Activated CD4-positive, alpha-beta T cell treated with anti-CD3 and anti-CD28 coated beads for 36 hours (primary cell): ENCODE measurements at regions of chr20 and their contacts with region 1.

Region 1: DNA sequence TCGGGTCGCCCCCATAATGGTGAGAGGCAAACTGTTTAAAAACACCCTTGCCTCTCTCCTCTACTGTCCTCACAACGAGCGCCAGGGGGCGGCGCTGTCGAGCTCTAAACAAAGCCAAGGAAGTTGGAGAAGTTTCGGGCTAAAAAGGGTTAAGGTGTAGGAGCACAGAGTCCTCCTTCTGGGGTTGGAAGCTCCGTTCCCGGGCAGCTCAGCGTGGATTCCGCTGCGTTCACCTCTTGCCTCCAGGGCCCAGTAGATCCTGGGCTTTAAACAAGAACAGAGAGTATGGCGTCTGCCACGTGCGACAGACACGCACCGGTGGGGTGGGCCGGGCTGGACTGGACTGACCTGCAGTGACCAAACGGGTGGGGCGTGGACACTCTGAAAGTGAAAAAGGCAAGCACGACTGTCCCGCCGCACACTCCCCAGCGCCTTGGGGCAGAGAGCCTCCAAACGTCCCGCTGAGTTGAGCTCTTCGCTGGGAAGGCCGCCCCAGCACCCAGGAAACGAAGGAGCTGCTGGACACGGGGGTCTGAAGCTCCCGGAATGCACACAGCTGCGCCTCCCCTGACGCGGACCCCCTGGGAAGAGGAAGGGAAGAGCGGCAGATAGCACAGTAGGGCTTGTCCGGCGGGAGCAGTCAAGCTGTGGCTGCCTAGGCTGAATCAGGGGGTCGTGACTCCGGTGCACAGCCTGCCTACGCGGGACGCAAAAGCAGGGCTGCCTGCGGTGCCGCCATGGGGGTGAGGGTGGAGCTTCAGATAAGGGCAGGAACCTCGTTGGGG is 1.6 kb upstream of the THBD start:
- DNase-seq: peak; percentile 78
- ATAC-seq: peak; percentile 49
- H3K4me3 Mint-ChIP-seq: no peak overlapping the region
- H3K27ac Mint-ChIP-seq: no peak overlapping the region
- H3K4me1 Mint-ChIP-seq: peaks cover 5% of the 10 kb centered on the region
- H3K27me3 Mint-ChIP-seq: peaks cover 52% of the 10 kb centered on the region

Region 2: DNA sequence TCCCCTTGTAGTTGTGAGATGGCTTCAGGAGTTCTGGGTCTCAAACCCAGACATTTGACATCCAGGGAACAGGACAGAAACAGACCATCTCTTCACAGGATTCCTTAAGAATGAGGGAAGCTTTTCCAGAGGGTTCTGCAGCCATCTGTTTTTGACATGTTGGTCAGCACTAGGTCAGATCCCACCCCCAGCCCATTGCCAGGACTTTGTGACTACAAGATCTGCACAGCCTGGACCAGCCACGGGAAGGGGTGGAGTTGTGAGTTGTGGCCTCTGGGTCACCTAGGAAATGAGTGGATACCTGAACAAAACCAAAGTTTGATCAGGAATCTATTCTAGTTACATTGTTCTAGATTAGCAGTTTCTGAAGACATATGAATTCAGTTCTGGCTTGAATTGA is 55.1 kb before region 1 on chr20:
- CTCF ChIA-PET with region 1: no interaction called
- POLR2A ChIA-PET with region 1: no interaction called
- intact Hi-C with region 1: no loop called
- DNase-seq: no peak
- ATAC-seq: no peak
- H3K4me3 Mint-ChIP-seq: no peak overlapping the region
- H3K27ac Mint-ChIP-seq: no peak overlapping the region
- H3K4me1 Mint-ChIP-seq: no peaks in the 10 kb centered on the region
- H3K27me3 Mint-ChIP-seq: peaks cover 2% of the 10 kb centered on the region

Region 3: DNA sequence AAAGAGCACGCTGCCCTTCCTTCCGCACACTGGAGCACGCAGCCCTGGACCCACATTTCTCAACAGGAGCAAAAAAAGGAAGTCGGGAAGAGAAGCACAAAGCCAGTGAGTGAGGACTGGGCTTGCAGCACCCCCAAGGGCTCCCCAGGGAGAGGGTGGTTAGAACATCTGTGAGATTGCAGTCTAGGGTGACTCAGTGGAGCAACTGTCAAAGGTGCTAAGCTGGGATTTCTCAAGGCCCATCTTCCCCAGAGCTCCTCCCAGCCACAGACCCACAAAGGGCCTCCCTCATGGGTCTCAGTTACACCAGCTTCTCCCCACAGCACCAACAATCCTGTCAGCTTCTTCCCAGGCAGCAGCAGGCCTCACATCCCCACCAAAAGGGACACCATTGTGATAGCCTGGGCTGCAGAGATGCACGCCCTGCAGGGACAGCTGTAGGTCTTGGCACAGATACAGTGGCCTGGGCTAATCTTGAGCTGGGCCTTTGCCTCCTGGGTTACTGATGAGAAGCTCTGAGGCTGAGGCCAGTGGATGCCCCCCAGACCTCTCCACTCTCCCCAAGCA is 74.7 kb after region 1 on chr20:
- CTCF ChIA-PET with region 1: no interaction called
- POLR2A ChIA-PET with region 1: no interaction called
- intact Hi-C with region 1: no loop called
- DNase-seq: no peak
- ATAC-seq: no peak
- H3K4me3 Mint-ChIP-seq: no peak overlapping the region
- H3K27ac Mint-ChIP-seq: no peak overlapping the region
- H3K4me1 Mint-ChIP-seq: no peaks in the 10 kb centered on the region
- H3K27me3 Mint-ChIP-seq: no peaks in the 10 kb centered on the region

Region 4: GRCh38 chr20:23235173-23236027 is 184.4 kb after region 1 on chr20:
- CTCF ChIA-PET with region 1: interaction called, 5 read pairs
- POLR2A ChIA-PET with region 1: no interaction called
- intact Hi-C with region 1: loop called (anchors 1 to 10 kb)
- DNase-seq: peak; percentile 72
- ATAC-seq: peak; percentile 63
- H3K4me3 Mint-ChIP-seq: no peak overlapping the region
- H3K27ac Mint-ChIP-seq: no peak overlapping the region
- H3K4me1 Mint-ChIP-seq: no peaks in the 10 kb centered on the region
- H3K27me3 Mint-ChIP-seq: peaks cover 2% of the 10 kb centered on the region

Region 5: DNA sequence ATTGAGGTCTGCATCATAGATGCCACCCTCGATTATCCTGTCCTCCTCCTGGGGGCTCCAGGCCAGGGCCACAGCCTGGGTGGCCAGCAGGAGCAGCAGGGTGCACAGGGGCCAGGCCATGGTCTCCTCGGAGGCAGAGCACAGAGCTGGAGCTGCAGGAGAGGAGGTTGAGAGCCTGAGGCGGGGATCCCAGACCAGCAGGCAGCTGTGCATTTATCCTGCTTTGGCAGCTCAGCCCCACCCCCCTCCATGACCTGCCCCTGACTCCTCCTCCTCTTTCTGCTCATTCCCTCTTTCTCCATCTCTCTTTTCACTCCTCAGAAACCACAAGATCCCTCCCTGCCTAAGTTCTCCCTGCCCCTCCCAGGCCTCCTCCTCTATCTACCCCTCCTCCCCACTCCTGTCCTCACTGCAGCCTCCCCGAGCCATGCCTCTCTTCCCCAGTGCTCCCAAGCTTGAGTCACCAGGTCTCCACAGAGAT is 775.5 kb after region 1 on chr20 and contains the start of gene CST2:
- CTCF ChIA-PET with region 1: no interaction called
- POLR2A ChIA-PET with region 1: no interaction called
- intact Hi-C with region 1: no loop called
- DNase-seq: no peak
- ATAC-seq: no peak
- H3K4me3 Mint-ChIP-seq: no peak within 1 kb of the TSS
- H3K27ac Mint-ChIP-seq: no peak within 1 kb of the TSS
- H3K4me1 Mint-ChIP-seq: peaks cover 3% of the 10 kb centered on the region
- H3K27me3 Mint-ChIP-seq: no peaks in the 10 kb centered on the region
- total RNA-seq, gene CST2: not detected